Activated CD4-positive, alpha-beta T cell treated with anti-CD3 and anti-CD28 coated beads for 36 hours (primary cell): ENCODE measurements at regions of chr14 and their contacts with region 1.

Region 1: DNA sequence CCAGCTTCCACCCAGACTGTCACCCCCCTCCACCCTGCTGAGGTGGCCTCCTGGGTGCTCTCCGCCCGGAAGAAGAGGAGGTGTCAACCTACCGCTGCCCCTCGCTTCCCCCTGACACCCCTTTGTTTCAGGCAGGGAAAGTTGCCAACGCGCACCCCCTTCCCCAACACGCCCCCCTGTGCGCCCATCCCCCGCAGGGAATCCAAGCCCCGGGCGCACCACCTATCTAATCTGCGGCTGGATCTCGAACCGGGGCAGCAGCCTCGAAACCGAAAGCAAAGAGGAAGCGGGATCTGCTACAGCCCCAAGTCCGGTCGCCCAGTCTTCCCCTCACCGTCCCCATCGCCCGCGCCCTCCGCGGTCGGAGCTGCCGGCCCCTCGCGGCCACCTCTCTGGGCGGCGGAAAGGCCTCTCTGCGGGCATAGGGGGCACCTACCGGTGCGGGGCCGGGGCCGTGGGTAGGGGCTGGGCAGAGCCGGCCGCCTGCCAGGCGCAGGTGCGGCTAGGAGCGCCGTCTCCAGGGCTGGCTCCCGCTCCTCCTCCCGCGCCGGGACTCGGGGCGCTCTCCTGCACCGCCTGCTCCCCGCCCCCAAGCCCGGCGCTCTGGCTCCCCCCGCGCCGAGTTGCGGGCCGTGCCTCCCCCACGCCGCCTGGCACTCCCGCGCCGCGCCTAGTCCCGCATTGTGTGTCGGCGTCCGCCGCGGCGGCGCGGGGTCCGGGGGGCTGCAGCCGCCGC is 18.3 kb upstream of the PLEKHH1 start:
- DNase-seq: peak; percentile 54
- ATAC-seq: peak; percentile 65
- H3K4me3 Mint-ChIP-seq: peak overlapping the region; percentile 70
- H3K27ac Mint-ChIP-seq: peak overlapping the region; percentile 70
- H3K4me1 Mint-ChIP-seq: peaks cover 5% of the 10 kb centered on the region
- H3K27me3 Mint-ChIP-seq: no peaks in the 10 kb centered on the region

Region 2: GRCh38 chr14:67487937-67488893 is 26.6 kb before region 1 on chr14 and contains the start of gene TMEM229B:
- CTCF ChIA-PET with region 1: interaction called, 3 read pairs
- POLR2A ChIA-PET with region 1: no interaction called
- intact Hi-C with region 1: loop called (anchors 1 kb)
- DNase-seq: peak; percentile 85
- ATAC-seq: peak; percentile 97
- H3K4me3 Mint-ChIP-seq: peak within 1 kb of the TSS; percentile 78
- H3K27ac Mint-ChIP-seq: peak within 1 kb of the TSS; percentile 91
- H3K4me1 Mint-ChIP-seq: peaks cover 55% of the 10 kb centered on the region
- H3K27me3 Mint-ChIP-seq: no peaks in the 10 kb centered on the region
- total RNA-seq, gene TMEM229B: 1.3 to 1.5 TPM

Region 3: DNA sequence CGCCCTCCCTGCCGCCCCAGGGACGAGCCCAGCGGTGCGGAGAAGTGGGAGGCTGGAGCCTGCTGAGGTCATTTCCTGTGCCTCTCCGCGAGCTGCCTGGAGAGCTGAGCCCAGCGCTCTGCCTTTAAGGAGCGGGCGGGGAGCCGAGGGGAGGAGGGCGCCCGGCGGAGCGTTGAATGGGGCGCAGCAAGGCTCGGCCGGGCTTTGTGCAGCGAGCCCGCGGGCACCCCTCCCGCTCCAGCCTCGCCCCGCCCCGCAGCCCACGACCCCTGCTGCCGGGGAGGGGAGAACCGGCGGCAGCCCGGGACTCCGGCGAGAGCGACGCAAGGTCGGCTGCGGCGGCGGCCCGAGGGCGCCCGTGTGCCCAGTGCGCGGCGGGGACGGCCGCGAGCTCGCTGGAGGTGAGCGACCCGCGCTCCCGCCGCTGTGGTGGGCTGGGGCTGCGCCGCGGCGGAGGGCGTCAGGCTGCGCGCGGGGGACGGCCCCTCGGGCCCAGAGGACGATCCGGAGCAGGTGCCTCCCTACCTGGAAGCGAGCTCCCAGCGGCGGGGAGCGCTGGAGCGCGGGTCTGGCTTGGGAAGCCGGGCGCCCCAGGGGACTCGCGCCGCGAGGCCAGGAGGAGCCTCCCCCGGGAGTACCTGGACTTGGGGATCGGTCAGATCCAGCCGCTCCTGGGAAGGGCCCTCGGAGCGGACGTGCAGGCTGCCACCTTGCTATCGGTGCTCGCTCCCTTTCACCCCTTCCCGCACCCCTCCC is 18.4 kb after region 1 on chr14 and contains the start of gene PLEKHH1:
- CTCF ChIA-PET with region 1: interaction called, 4 read pairs
- POLR2A ChIA-PET with region 1: no interaction called
- intact Hi-C with region 1: loop called in 1 of 2 experiments (anchors 2 kb)
- DNase-seq: peak; percentile 82
- ATAC-seq: peak; percentile 99
- H3K4me3 Mint-ChIP-seq: peak within 1 kb of the TSS; percentile 66
- H3K27ac Mint-ChIP-seq: no peak within 1 kb of the TSS
- H3K4me1 Mint-ChIP-seq: peaks cover 3% of the 10 kb centered on the region
- H3K27me3 Mint-ChIP-seq: peaks cover 17% of the 10 kb centered on the region
- total RNA-seq, gene PLEKHH1: 4.1 to 5.7 TPM